PC-3 (cell line): ENCODE measurements at regions of chr1 and their contacts with region 1.

Region 1: GRCh38 chr1:9784508-9785133 is 39.1 kb downstream of the CLSTN1 start:
- DNase-seq: peak; percentile 85
- ATAC-seq: peak; percentile 51
- H3K4me3 ChIP-seq: no peak overlapping the region
- H3K27ac ChIP-seq: no peak overlapping the region
- H3K4me1 ChIP-seq: peaks cover 19% of the 10 kb centered on the region
- H3K27me3 ChIP-seq: no peaks in the 10 kb centered on the region
- CTCF ChIP-seq: peak; percentile 91

Region 2: GRCh38 chr1:9766759-9767442 is 17.7 kb before region 1 on chr1:
- CTCF ChIA-PET with region 1: interaction called, 4 read pairs
- POLR2A ChIA-PET with region 1: no interaction called
- intact Hi-C with region 1: loop called (anchors 2 kb)
- DNase-seq: peak; percentile 96
- ATAC-seq: peak; percentile 97
- H3K4me3 ChIP-seq: no peak overlapping the region
- H3K27ac ChIP-seq: peak overlapping the region; percentile 81
- H3K4me1 ChIP-seq: peaks cover 29% of the 10 kb centered on the region
- H3K27me3 ChIP-seq: no peaks in the 10 kb centered on the region
- CTCF ChIP-seq: no peak

Region 3: GRCh38 chr1:9823943-9824701 is 39.5 kb after region 1 on chr1 and contains the start of gene CLSTN1:
- CTCF ChIA-PET with region 1: no interaction called
- POLR2A ChIA-PET with region 1: no interaction called
- intact Hi-C with region 1: loop called (anchors 2 kb)
- DNase-seq: peak; percentile 87
- ATAC-seq: peak; percentile 31
- H3K4me3 ChIP-seq: peak within 1 kb of the TSS; percentile 83
- H3K27ac ChIP-seq: peak within 1 kb of the TSS; percentile 42
- H3K4me1 ChIP-seq: peaks cover 38% of the 10 kb centered on the region
- H3K27me3 ChIP-seq: no peaks in the 10 kb centered on the region
- CTCF ChIP-seq: no peak
- total RNA-seq, gene CLSTN1: 98.3 and 117 TPM in 2 replicates

Region 4: DNA sequence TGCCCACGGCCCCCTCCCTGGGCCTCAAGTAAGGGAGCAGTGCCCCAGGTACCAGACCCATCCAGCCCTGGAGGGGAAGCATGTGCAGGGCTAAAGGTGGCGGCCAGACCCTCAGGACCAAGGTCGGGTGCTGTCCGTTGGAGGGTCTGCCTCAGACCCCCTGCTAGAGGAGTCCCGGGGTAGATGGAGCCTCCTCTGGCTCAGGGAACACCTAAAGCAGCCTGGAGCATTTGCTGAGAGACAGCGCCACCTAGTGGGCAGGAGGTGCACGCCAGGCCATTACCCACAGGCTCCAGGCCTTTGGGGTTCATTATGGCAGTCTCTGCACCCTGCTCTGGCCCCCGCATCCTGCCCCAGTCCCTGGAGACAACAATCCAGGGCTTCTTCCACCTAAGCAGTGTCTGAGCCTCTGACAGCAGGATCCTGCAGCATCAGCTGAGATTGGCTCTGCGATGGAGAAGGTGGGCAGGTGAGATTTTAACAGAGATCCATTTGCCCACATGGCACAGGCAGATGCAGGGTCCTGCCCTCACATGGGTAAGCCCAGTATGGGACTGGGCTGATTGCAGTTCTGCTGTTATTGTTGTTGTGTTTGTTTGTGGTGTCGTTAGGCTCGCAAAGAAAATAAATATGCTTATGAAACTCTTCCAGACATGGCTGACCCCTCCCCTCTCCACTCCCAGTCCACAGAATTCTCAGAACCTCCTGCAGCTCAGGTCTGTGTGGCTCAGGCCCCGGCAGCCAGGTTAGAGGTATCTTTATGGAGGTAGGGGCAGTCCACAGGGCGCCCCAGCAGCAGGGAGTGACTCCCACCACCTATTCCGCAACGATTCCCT is 83.0 kb after region 1 on chr1:
- CTCF ChIA-PET with region 1: interaction called, 16 read pairs
- POLR2A ChIA-PET with region 1: no interaction called
- intact Hi-C with region 1: loop called (anchors 1 kb)
- DNase-seq: peak; percentile 77
- ATAC-seq: peak; percentile 95
- H3K4me3 ChIP-seq: no peak overlapping the region
- H3K27ac ChIP-seq: no peak overlapping the region
- H3K4me1 ChIP-seq: peaks cover 5% of the 10 kb centered on the region
- H3K27me3 ChIP-seq: no peaks in the 10 kb centered on the region
- CTCF ChIP-seq: peak; percentile 95

Region 5: DNA sequence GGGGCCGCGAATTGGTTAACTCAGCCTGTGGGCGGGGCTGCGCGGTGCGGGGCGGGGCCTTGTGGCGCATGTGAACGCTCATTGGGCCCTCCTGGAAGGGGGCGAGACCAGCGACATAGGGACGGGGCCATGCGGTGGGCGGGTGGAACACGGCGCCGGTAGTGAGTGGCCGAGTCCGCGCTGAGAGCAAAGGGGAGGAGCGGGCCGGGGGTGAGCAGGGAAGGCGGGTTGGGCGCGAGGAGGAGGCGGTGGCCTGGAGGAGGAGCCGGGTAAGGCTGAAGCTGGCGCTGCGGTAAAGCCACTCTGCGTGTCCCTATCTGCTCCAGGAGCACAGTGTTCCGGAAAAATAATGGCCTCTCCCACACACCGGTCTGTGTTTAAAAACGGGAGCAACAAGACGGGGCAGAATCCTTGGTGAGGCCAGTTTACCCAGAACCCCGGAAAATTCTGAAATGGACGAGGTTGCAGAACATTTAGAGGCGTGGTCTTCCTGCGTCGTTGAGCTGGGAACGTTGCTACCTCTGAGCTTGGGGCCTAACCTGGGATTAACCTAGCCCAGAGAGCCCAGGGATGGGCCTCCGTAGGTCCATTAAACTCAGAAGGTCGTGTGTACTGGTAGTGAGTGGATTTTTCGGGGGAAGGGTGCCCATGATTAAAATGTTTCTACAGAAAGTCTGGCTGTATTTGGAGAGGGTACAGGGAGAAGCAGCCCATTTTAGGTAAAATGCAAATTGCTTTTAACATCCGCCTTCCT is 126.0 kb after region 1 on chr1:
- CTCF ChIA-PET with region 1: interaction called, 7 read pairs
- POLR2A ChIA-PET with region 1: no interaction called
- intact Hi-C with region 1: loop called (anchors 5 kb)
- DNase-seq: peak; percentile 98
- ATAC-seq: peak; percentile 97
- H3K4me3 ChIP-seq: peak overlapping the region; percentile 70
- H3K27ac ChIP-seq: peak overlapping the region; percentile 52
- H3K4me1 ChIP-seq: peaks cover 13% of the 10 kb centered on the region
- H3K27me3 ChIP-seq: no peaks in the 10 kb centered on the region
- CTCF ChIP-seq: no peak

Region 6: DNA sequence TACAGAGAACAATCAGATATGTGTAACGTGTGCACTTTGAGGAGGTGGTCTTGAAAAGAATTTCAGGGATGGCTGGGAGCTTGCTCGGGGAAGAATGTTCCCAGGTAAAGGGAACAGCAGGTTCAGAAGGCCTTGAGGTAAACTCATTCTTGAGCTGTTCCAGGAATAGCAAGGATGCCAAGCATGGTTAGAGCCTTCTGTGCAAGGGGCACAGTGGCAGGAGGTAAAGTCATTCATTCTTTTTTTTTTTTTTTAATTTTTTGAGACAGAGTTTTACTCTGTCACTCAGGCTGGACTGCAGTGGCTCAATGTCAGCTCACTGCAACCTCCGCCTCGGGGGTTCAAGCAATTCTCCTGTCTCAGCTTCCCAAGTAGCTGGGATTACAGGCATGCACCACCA is 258.1 kb after region 1 on chr1:
- CTCF ChIA-PET with region 1: no interaction called
- POLR2A ChIA-PET with region 1: no interaction called
- intact Hi-C with region 1: no loop called
- DNase-seq: no peak
- ATAC-seq: no peak
- H3K4me3 ChIP-seq: no peak overlapping the region
- H3K27ac ChIP-seq: no peak overlapping the region
- H3K4me1 ChIP-seq: no peaks in the 10 kb centered on the region
- H3K27me3 ChIP-seq: no peaks in the 10 kb centered on the region
- CTCF ChIP-seq: no peak

Region 7: DNA sequence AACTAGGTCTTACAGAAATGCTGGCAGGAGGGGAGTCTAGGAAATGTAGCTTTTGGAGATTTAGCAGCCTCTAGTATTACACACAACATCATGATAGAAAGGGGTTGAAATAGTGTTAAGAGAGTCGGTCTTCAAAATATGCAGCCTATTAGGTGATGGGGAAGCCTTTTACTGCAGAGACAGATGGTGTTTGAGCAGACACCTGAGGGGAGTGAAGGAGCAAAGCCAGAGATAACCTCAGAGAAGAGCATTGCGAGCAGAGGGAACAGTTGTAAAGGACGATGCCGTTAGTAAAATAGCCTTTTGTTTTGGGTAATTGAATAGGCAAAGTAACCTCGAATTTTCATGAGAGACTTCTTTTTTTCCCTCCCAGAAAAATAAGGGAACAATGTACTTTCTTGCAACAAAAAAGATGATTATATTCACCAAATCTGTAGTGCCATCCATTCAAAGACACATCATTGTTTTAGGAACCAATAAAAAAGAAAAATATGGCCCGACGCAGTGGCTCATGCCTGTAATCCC is 359.4 kb after region 1 on chr1:
- CTCF ChIA-PET with region 1: no interaction called
- POLR2A ChIA-PET with region 1: no interaction called
- intact Hi-C with region 1: loop called (anchors 10 kb)
- DNase-seq: no peak
- ATAC-seq: no peak
- H3K4me3 ChIP-seq: no peak overlapping the region
- H3K27ac ChIP-seq: no peak overlapping the region
- H3K4me1 ChIP-seq: no peaks in the 10 kb centered on the region
- H3K27me3 ChIP-seq: no peaks in the 10 kb centered on the region
- CTCF ChIP-seq: no peak